ENCODE measurements at regions of chr15 and their contacts with region 1.

Region 1: DNA sequence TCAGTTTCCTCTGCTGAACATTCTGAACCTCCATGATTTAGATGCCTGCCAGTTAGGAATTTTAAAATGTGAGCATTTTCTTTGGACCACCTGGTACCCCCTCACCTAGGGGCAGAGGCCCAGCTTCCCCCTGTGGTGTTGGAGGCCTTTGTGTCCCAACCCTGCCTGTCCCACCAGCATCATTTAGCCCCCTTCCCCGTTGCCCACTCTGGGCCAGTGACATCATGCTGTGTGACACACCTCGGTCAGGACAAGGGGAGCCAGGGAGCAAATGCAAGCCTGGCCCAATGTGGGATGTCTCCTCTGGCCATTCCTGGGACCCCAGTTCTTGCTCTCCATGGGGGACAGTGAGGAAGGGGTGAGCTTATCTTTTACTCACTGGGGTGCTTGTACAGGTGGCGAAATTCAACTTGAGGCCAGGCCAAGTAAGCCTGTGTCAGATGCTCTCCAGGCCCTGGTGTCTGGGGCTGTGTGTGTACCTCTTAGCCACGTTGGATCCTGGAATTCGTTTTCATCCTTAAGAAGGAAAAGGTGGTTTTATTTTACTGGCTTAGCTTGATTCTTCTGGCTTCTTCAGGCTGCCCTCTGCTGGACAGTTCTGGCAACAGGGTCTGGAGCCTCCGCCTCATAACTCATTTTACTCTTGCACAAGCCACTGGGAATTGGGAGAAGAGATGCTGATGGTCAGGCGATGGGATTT is 49.7 kb upstream of the MYZAP start:
- DNase-seq: peak; percentile 83
- H3K4me3 ChIP-seq: no peak overlapping the region
- H3K27ac ChIP-seq: no peak overlapping the region
- H3K4me1 ChIP-seq: peaks cover 20% of the 10 kb centered on the region
- H3K27me3 ChIP-seq: no peaks in the 10 kb centered on the region
- CTCF ChIP-seq: peak; percentile 92

Region 2: GRCh38 chr15:57340682-57341259 is 201.2 kb before region 1 on chr15:
- CTCF ChIA-PET with region 1: interaction called, 12 read pairs
- POLR2A ChIA-PET with region 1: no interaction called
- intact Hi-C with region 1: loop called (anchors 1 kb)
- DNase-seq: peak; percentile 68
- H3K4me3 ChIP-seq: no peak overlapping the region
- H3K27ac ChIP-seq: no peak overlapping the region
- H3K4me1 ChIP-seq: peaks cover 6% of the 10 kb centered on the region
- H3K27me3 ChIP-seq: no peaks in the 10 kb centered on the region
- CTCF ChIP-seq: peak; percentile 86

Region 3: DNA sequence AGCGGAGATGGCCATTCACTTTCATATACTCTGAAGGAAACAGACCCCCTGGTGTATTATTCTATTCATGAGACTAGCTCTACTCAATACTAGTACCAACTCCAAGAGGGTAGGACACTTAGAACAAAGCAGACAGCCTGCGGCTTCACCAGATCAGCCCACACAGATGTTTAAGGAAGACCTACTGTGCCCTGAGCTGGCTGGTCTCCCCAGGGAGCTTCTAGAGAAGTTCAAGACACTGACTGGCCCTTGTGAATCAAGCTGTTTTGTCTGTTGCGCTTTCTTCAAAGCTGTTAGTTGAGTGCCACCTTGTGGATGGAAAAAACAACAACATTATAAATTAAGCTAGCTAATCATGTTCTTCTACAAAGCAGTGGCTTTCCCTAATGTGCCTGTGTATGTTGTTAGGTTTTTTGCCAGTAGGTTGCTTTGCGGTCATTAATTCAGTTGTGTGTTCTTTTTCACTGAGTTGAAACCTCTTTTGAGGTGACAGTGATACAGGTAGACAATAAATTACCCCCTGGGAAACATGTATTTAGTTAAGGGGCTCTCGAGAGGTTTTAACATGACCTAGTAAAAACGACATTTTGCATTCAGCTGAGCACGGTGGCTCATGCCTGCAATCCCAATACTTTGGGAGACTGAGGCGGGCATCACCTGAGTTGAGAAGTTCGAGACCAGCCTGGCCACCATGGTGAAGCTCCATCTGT is 14.4 kb before region 1 on chr15:
- CTCF ChIA-PET with region 1: interaction called, 20 read pairs
- POLR2A ChIA-PET with region 1: no interaction called
- intact Hi-C with region 1: no loop called
- DNase-seq: peak; percentile 98
- H3K4me3 ChIP-seq: no peak overlapping the region
- H3K27ac ChIP-seq: no peak overlapping the region
- H3K4me1 ChIP-seq: peaks cover 19% of the 10 kb centered on the region
- H3K27me3 ChIP-seq: no peaks in the 10 kb centered on the region
- CTCF ChIP-seq: peak; percentile 75

Region 4: DNA sequence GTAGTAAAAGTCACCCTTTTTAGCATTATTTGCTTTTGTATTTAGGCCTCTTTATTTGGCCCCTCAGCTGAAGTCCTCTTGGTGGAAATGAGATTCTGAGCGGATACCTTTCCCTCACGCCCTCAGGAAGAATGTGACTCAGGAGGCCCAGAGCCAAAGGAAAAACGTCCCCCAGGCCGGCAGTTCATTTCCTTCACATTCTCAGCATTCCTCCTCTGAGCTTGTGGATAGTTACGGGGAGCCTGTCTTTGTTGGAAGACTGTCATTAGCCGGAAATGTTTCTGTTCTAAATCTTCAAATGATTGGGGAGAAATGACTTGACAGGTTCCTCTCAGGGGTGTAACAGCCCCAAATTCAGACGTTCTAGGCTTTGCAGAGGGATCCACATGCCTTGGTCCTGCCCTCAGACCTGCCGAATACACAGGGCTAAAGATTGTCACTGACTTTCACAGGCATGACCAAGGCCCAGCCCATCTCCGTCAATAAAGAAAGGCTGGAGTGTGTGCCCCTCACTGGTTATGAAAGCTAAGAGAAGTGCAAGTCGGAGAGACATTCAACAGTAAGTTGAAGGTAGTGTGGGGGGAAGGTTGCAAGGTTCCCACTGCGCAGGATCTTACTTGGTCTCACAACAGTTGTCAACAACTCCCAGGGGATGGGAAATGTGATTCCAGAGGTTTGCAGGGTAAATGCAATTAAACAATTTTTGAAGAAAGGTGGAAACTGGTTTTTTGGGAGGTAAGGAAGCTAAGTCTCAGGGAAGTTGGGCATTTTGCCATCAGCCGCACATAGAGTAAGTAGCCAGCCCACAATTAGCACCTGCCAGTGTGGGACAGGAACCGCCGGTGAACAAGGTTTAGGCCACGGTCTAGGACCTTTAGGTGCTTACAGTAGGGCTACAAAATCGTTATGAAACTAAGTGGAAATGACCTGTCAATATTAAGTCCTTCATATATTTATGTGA is 10.0 kb after region 1 on chr15:
- CTCF ChIA-PET with region 1: interaction called, 10 read pairs
- POLR2A ChIA-PET with region 1: no interaction called
- intact Hi-C with region 1: no loop called
- DNase-seq: peak; percentile 83
- H3K4me3 ChIP-seq: no peak overlapping the region
- H3K27ac ChIP-seq: peak overlapping the region; percentile 63
- H3K4me1 ChIP-seq: peaks cover 41% of the 10 kb centered on the region
- H3K27me3 ChIP-seq: no peaks in the 10 kb centered on the region
- CTCF ChIP-seq: no peak

Region 5: GRCh38 chr15:57720867-57721266 is 178.9 kb after region 1 on chr15:
- CTCF ChIA-PET with region 1: no interaction called
- POLR2A ChIA-PET with region 1: interaction called, 16 read pairs
- intact Hi-C with region 1: no loop called
- DNase-seq: no peak
- H3K4me3 ChIP-seq: no peak overlapping the region
- H3K27ac ChIP-seq: no peak overlapping the region
- H3K4me1 ChIP-seq: peaks cover 6% of the 10 kb centered on the region
- H3K27me3 ChIP-seq: no peaks in the 10 kb centered on the region
- CTCF ChIP-seq: no peak